Panc1 (cell line): ENCODE measurements at regions of chr3 and their contacts with region 1.

Region 1: DNA sequence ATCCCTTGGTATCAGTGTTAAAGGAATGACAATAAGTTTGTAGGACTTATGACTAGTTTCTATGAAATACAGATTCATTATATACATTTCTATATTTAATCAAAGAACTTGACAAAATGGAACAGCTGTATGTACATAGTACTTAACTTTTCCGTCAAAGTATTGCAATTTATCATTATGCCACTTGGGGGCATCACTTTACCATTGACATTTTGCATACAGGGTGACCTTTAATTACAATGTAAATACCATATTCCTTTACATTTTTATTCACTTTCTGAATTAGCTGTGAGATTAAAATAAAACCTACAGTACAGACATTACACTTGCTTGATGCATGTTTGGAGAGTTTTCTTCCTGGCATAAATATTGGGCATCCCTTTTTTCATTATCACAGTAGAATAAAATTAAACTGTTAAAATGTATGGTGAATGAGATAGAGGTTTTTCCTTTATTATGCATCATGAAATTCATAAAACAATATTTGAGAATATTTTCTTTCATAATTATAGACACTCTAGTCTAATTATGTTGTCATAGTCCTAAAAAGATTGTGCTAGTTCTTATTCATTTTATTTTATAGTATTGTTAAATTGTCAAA is 6.9 kb downstream of the NEK11 start:
- DNase-seq: peak; percentile 50
- ATAC-seq: peak; percentile 90
- H3K4me3 ChIP-seq: no peak overlapping the region
- H3K27ac ChIP-seq: no peak overlapping the region
- H3K4me1 ChIP-seq: no peaks in the 10 kb centered on the region
- H3K27me3 ChIP-seq: no peaks in the 10 kb centered on the region
- CTCF ChIP-seq: peak; percentile 71; the same call in 1 of the 2 replicates

Region 2: GRCh38 chr3:131361464-131362421 is 328.2 kb after region 1 on chr3:
- CTCF ChIA-PET with region 1: no interaction called
- POLR2A ChIA-PET with region 1: no interaction called
- in situ Hi-C with region 1: no loop called
- intact Hi-C with region 1: loop called (anchors 10 kb)
- DNase-seq: peak; percentile 67
- ATAC-seq: peak; percentile 98
- H3K4me3 ChIP-seq: peak overlapping the region; percentile 56 to 57
- H3K27ac ChIP-seq: peak overlapping the region; percentile 71
- H3K4me1 ChIP-seq: peaks cover 6% of the 10 kb centered on the region; the same call in 1 of the 2 replicates
- H3K27me3 ChIP-seq: no peaks in the 10 kb centered on the region
- CTCF ChIP-seq: no peak

Region 3: GRCh38 chr3:131485119-131485518 is 451.5 kb after region 1 on chr3:
- CTCF ChIA-PET with region 1: no interaction called
- POLR2A ChIA-PET with region 1: no interaction called
- in situ Hi-C with region 1: no loop called
- intact Hi-C with region 1: loop called (anchors 10 kb)
- DNase-seq: no peak
- ATAC-seq: no peak
- H3K4me3 ChIP-seq: no peak overlapping the region
- H3K27ac ChIP-seq: no peak overlapping the region
- H3K4me1 ChIP-seq: no peaks in the 10 kb centered on the region
- H3K27me3 ChIP-seq: no peaks in the 10 kb centered on the region
- CTCF ChIP-seq: no peak

Region 4: DNA sequence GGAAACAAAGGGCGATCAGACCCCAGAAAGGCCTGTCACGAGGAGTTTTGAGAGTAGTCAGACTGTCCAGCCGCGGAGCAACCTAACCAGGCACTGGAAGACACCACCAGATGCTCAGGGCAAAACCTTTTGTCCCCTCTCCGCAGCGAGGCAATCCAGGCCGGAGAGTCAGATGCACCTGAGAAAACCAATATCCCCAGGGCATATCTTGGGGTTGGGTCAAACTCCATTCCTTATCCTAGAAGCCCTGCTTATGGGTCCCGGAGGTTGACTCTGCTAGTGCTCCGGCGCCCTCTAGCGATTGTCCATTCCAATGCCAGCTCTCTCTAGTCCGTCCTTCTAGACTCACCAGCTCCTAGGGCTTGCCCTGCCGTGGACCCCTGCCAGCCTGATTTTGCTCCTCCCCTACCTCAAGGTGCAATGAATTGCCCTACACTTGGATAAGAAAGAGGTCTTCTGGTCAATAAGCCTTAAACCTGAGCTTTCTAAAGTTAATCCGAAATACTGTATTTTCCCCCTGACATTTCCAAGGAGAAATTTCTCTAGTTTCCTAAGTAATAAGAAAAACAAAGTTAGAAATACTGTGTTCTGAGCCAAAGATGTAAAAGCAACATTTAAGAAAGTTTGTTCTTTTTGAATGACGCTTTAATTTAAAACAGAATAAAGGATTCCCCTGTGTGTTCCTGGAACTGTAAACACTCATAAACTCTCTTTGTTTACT is 995.8 kb after region 1 on chr3:
- CTCF ChIA-PET with region 1: no interaction called
- POLR2A ChIA-PET with region 1: no interaction called
- in situ Hi-C with region 1: no loop called
- intact Hi-C with region 1: loop called (anchors 5 kb)
- DNase-seq: peak; percentile 54
- ATAC-seq: peak; percentile 98
- H3K4me3 ChIP-seq: no peak overlapping the region
- H3K27ac ChIP-seq: no peak overlapping the region
- H3K4me1 ChIP-seq: 0 out of 2 replicates have a peak, but pooled peaks cover under 1% of the 10 kb centered on the region
- H3K27me3 ChIP-seq: peaks cover 23% of the 10 kb centered on the region
- CTCF ChIP-seq: peak; percentile 98